ENCODE measurements at regions of chr11 and their contacts with region 1.

Region 1: DNA sequence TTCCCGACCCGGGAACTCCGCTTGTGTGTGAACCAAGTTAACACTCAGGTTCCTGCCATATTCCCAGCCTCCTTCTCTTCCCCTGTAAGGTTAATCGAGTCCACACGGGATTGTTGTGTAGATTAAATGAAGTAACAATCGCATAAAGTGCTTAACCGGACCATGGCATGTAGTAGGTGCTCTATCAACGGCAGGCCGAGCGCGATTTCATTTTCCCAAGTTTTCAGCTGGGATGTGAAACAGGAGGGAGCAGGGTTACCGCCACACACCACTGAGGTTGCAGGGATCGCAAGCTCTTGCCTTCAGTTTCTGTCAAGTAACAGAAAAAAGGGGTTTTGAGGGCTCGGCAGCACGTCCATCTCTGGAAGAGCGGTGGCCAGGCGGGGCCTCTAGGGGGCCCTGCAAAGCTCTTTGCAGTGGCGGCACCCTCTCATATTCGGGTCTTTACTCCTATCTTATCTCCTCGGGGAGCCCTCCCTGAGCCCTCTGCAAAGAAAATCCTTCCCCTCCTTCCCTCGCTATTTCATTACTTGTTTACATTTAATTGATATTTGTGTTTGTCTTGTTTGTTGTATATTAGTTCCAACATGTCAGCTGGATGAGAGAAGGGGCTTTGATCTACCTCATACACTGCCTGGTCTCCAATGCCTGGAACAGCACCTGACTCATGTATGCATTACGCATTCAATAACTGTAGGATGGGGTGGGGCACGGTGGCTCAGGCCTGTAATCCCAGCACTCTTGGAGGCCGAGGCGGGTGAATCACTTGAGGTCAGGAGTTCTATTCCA is 818 bp upstream of the PLEKHA7 start:
- DNase-seq: peak; percentile 82
- H3K4me3 ChIP-seq: peak overlapping the region; percentile 43 to 55
- H3K27ac ChIP-seq: no peak overlapping the region
- H3K4me1 ChIP-seq: peaks cover 0 to 3% of the 10 kb centered on the region in 2 experiments; a peak in 1 of 4 replicates
- H3K27me3 ChIP-seq: peaks cover 49% of the 10 kb centered on the region
- CTCF ChIP-seq: peak; percentile 44
- EP300 ChIP-seq: no peak
- RAD21 ChIP-seq: no peak

Region 2: GRCh38 chr11:16997624-16998023 is 17.4 kb before region 1 on chr11:
- CTCF ChIA-PET with region 1: interaction called, 26 read pairs
- POLR2A ChIA-PET with region 1: no interaction called
- DNase-seq: no peak
- H3K4me3 ChIP-seq: no peak overlapping the region
- H3K27ac ChIP-seq: no peak overlapping the region
- H3K4me1 ChIP-seq: peaks cover 0 to 9% of the 10 kb centered on the region in 2 experiments; a peak in 1 of 4 replicates
- H3K27me3 ChIP-seq: no peaks in the 10 kb centered on the region; the same call in 1 of the 2 replicates
- CTCF ChIP-seq: no peak
- EP300 ChIP-seq: no peak
- RAD21 ChIP-seq: no peak

Region 3: GRCh38 chr11:17026487-17027082 is 11.6 kb after region 1 on chr11:
- CTCF ChIA-PET with region 1: interaction called, 13 read pairs
- POLR2A ChIA-PET with region 1: no interaction called
- DNase-seq: no peak
- H3K4me3 ChIP-seq: no peak overlapping the region
- H3K27ac ChIP-seq: no peak overlapping the region
- H3K4me1 ChIP-seq: no peaks in the 10 kb centered on the region
- H3K27me3 ChIP-seq: 0 out of 2 replicates have a peak, but pooled peaks cover 2% of the 10 kb centered on the region
- CTCF ChIP-seq: no peak
- EP300 ChIP-seq: no peak
- RAD21 ChIP-seq: no peak

Region 4: GRCh38 chr11:17443926-17444690 is 429.1 kb after region 1 on chr11:
- CTCF ChIA-PET with region 1: no interaction called
- POLR2A ChIA-PET with region 1: no interaction called
- DNase-seq: no peak
- H3K4me3 ChIP-seq: no peak overlapping the region
- H3K27ac ChIP-seq: no peak overlapping the region
- H3K4me1 ChIP-seq: no peaks in the 10 kb centered on the region
- H3K27me3 ChIP-seq: no peaks in the 10 kb centered on the region; the same call in none of the 2 replicates
- CTCF ChIP-seq: no peak
- EP300 ChIP-seq: no peak
- RAD21 ChIP-seq: no peak

Region 5: GRCh38 chr11:17658211-17658610 is 643.2 kb after region 1 on chr11:
- CTCF ChIA-PET with region 1: no interaction called
- POLR2A ChIA-PET with region 1: no interaction called
- DNase-seq: no peak
- H3K4me3 ChIP-seq: no peak overlapping the region
- H3K27ac ChIP-seq: no peak overlapping the region
- H3K4me1 ChIP-seq: no peaks in the 10 kb centered on the region
- H3K27me3 ChIP-seq: no peaks in the 10 kb centered on the region
- CTCF ChIP-seq: no peak
- EP300 ChIP-seq: no peak
- RAD21 ChIP-seq: no peak